Ovary (tissue), 10 donors: ENCODE measurements at regions of chr12 and their contacts with region 1.

Region 1: DNA sequence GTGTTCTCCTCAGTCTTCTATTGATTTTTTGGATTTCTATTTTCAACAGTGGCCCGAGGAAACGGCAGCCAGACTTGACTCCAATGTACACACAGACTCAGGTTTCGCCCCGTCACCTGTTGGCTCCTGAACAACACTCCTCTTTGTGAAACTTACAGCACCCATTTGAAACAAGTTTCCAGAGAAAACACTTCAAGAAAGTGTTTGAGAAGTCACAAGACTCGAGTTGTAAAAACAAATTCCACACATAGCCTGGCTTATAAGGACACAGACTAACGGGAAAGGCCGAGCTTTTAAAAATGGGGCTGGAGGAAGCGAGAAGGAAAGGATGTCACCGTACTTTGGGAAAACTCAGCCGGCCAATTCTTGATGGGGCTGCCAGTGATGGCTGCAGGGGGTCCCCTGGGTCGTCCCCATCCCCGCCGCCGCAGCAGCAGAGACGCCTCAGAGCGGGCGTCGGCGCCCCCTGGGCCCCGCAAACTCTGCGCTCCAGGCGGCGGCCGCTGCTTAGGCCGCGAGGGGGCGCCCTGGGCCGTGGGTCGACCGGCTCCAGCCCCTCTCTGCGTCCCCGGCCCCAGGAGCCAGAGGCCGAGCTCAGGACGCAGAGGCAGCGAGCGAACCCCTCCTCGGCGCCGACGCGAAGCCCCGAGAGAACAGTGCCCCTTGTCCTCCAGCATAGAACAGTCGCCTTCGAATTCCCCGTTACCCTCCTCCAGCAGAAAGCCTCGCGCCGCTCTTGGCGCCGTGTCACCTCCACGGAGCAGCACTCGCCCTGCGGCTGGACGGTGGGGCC is 106.9 kb downstream of the PRICKLE1 start:
- DNase-seq: peak; percentile 78 to 91 (median 86)
- H3K4me3 ChIP-seq: peak overlapping the region; percentile 83
- H3K27ac ChIP-seq: peak overlapping the region; percentile 94 to 97
- H3K4me1 ChIP-seq: peaks cover 10% of the 10 kb centered on the region
- H3K27me3 ChIP-seq: no peaks in the 10 kb centered on the region
- CTCF ChIP-seq: peak; percentile 91 to 92 (median 92)
- EP300 ChIP-seq: no peak
- POLR2A ChIP-seq: peak; percentile 18

Region 2: GRCh38 chr12:42568952-42569915 is 86.6 kb after region 1 on chr12:
- intact Hi-C with region 1: loop called in 2 of 4 experiments (anchors 5 kb)
- DNase-seq: no peak
- H3K4me3 ChIP-seq: no peak overlapping the region
- H3K27ac ChIP-seq: no peak overlapping the region
- H3K4me1 ChIP-seq: peaks cover 5% of the 10 kb centered on the region
- H3K27me3 ChIP-seq: no peaks in the 10 kb centered on the region
- CTCF ChIP-seq: peak in 2 of 3 donors; percentile 40 to 57
- EP300 ChIP-seq: no peak
- POLR2A ChIP-seq: no peak

Region 3: GRCh38 chr12:42584651-42585111 is 102.0 kb after region 1 on chr12:
- intact Hi-C with region 1: loop called in 3 of 4 experiments (anchors 5 to 10 kb)
- DNase-seq: no peak
- H3K4me3 ChIP-seq: no peak overlapping the region
- H3K27ac ChIP-seq: no peak overlapping the region
- H3K4me1 ChIP-seq: peaks cover 9% of the 10 kb centered on the region
- H3K27me3 ChIP-seq: no peaks in the 10 kb centered on the region
- CTCF ChIP-seq: no peak
- EP300 ChIP-seq: no peak
- POLR2A ChIP-seq: no peak

Region 4: DNA sequence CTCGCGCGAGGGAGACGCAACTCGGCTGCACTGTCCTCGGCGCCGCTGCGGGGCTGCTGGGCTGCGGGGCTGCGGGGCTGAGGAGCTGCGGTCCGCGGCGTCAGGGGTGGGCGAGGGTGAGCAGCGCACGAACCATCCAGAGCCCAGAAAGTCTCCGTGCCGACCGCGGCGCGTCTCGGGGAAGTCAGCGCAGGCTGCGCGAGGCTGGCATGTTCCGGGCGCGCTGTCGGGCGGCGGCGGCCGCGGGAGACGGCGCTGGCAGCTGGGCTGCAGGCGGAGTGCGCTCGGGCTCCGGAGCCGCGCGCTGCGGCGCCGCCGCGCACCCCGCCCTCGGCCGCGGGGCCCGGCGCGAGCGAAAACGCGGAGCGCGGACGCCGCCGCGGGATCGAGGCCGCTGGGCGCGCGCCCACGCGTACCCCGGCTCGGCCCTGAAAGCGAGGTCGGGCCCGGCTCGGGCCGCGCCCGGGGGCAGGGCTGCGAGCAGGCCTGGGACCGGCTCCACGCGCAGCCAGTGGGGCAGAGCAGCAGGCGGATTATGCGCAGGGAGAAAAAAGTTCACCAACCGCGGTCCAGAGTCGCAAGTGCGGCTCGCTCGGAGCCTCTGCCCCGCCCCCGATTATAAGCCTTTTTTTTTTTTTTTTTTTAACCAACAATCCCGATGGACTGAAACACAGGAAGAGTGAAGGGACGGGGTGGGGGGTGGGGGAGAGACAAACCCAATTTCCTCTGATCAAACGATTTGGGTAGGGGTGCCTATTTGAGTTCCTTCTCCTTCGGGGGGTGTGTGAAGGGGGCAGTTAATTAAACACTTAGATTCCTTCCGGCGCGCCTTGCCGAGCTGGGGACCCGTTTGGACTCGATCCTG is 107.1 kb after region 1 on chr12 and contains the start of gene PRICKLE1:
- intact Hi-C with region 1: loop called in 3 of 4 experiments (anchors 5 to 10 kb)
- DNase-seq: peak; percentile 38 to 71 (median 52)
- H3K4me3 ChIP-seq: peak within 1 kb of the TSS; percentile 81
- H3K27ac ChIP-seq: peak within 1 kb of the TSS in 1 of 2 donors; percentile 27
- H3K4me1 ChIP-seq: peaks cover 7% of the 10 kb centered on the region
- H3K27me3 ChIP-seq: no peaks in the 10 kb centered on the region
- CTCF ChIP-seq: no peak
- EP300 ChIP-seq: no peak
- POLR2A ChIP-seq: no peak
- total RNA-seq, gene PRICKLE1: 14.2 to 35.2 (median 22.5) TPM

Region 5: GRCh38 chr12:43282106-43282505 is 799.5 kb after region 1 on chr12:
- intact Hi-C with region 1: loop called in 2 of 4 experiments (anchors 5 to 10 kb)
- DNase-seq: no peak
- H3K4me3 ChIP-seq: no peak overlapping the region
- H3K27ac ChIP-seq: no peak overlapping the region
- H3K4me1 ChIP-seq: no peaks in the 10 kb centered on the region
- H3K27me3 ChIP-seq: no peaks in the 10 kb centered on the region
- CTCF ChIP-seq: peak in 1 of 3 donors; percentile 21
- EP300 ChIP-seq: no peak
- POLR2A ChIP-seq: no peak